K562 (cell line): ENCODE measurements at regions of chr16 and their contacts with region 1.

Region 1: DNA sequence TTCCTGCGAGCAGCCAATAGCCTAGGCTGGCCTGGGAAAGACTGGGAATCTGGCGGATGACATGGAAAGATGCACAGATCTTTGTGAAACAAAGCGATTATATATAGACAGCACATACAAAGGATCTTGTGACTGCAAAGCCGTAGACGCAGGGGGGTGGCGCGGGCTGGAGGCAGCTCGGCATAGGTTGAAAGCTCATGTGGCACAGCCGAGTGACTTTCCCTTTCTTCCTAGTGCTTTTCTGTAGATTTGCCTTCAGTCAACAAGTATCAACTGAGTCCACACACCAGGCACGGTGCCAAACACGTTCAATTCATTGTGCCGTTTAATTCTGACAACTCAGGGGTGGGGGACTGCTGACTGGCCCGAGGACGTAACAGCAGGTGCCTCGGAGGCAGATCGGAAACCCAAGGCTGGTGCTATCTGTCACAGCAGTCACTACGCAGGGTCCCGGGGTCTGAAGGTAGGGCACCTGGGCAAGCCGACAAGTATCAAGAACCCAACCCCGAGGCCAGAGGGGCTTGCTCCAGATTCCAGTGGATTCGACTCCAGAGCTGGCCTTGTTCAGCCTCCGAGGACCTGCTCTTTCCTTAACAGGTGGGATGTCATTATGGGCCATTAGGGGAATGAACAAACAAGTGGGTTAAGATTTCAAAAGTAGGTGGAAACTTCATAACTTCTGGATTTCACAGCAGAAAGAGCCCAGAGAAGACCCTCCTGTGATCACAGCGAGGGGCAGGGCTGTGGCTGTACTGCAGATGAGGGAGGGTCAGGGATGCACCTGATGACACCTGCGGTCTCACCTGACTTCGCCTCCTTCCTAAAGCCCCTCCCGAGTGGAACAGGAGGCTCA is 5.9 kb downstream of the PAM16 start:
- DNase-seq: no peak
- ATAC-seq: no peak
- H3K4me3 ChIP-seq: no peak overlapping the region
- H3K27ac ChIP-seq: 0 out of 3 replicates have a peak overlapping the region, but pooled peaks have one; percentile 13
- H3K4me1 ChIP-seq: peaks cover 17 to 43% of the 10 kb centered on the region in 2 experiments; a peak in 4 of 5 replicates
- H3K27me3 ChIP-seq: no peaks in the 10 kb centered on the region
- CTCF ChIP-seq: no peak
- EP300 ChIP-seq: no peak
- POLR2A ChIP-seq: no peak
- RAD21 ChIP-seq: no peak

Region 2: GRCh38 chr16:4271176-4272066 is 73.8 kb before region 1 on chr16:
- CTCF ChIA-PET with region 1: no interaction called
- POLR2A ChIA-PET with region 1: interaction called, 4 read pairs
- in situ Hi-C with region 1: loop called (anchors 5 kb)
- intact Hi-C with region 1: no loop called
- DNase-seq: peak; percentile 87 to 96 (median 88)
- ATAC-seq: peak; percentile 95
- H3K4me3 ChIP-seq: peak overlapping the region; percentile 98
- H3K27ac ChIP-seq: peak overlapping the region; percentile 90
- H3K4me1 ChIP-seq: peaks cover 17 to 29% of the 10 kb centered on the region in 2 experiments; a peak in 4 of 5 replicates
- H3K27me3 ChIP-seq: no peaks in the 10 kb centered on the region
- CTCF ChIP-seq: peak in 2 of 3 experiments; percentile 49 to 81; a peak in 4 of 6 replicates
- EP300 ChIP-seq: no peak
- POLR2A ChIP-seq: peak; percentile 83
- RAD21 ChIP-seq: no peak